Ovary (tissue), 10 donors: ENCODE measurements at regions of chr9 and their contacts with region 1.

Region 1: GRCh38 chr9:124420991-124421543 is 5.8 kb upstream of the PSMB7 start:
- DNase-seq: no peak
- H3K4me3 ChIP-seq: no peak overlapping the region
- H3K27ac ChIP-seq: no peak overlapping the region
- H3K4me1 ChIP-seq: no peaks in the 10 kb centered on the region
- H3K27me3 ChIP-seq: no peaks in the 10 kb centered on the region
- CTCF ChIP-seq: no peak
- EP300 ChIP-seq: no peak
- POLR2A ChIP-seq: no peak

Region 2: GRCh38 chr9:124399323-124399967 is 21.6 kb before region 1 on chr9:
- intact Hi-C with region 1: no loop called
- DNase-seq: no peak
- H3K4me3 ChIP-seq: no peak overlapping the region
- H3K27ac ChIP-seq: no peak overlapping the region
- H3K4me1 ChIP-seq: peaks cover 4% of the 10 kb centered on the region
- H3K27me3 ChIP-seq: no peaks in the 10 kb centered on the region
- CTCF ChIP-seq: no peak
- EP300 ChIP-seq: no peak
- POLR2A ChIP-seq: no peak

Region 3: DNA sequence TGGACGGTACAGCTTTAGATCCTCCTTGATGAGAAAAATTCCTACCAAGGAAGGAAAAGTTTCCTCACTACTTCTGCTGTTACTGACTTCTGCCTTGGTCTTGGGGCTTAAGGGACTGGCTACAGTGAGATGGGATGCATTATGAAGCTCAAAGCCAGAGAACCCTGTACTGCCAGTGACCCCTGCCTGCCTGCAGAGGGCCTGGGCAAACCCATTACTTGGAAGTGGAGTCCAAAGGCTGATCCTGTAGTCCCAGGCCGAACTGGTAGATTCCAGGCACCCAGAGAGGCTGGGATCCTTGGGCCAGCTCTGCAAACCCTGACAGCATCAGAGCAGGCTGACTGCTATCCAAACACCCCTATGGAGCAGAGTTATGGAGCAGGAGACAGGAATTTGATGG is 111.8 kb after region 1 on chr9:
- intact Hi-C with region 1: loop called (anchors 2 to 5 kb)
- DNase-seq: no peak
- H3K4me3 ChIP-seq: no peak overlapping the region
- H3K27ac ChIP-seq: no peak overlapping the region
- H3K4me1 ChIP-seq: no peaks in the 10 kb centered on the region
- H3K27me3 ChIP-seq: no peaks in the 10 kb centered on the region
- CTCF ChIP-seq: no peak
- EP300 ChIP-seq: no peak
- POLR2A ChIP-seq: no peak

Region 4: GRCh38 chr9:124537926-124538325 is 116.9 kb after region 1 on chr9:
- intact Hi-C with region 1: loop called (anchors 2 to 5 kb)
- DNase-seq: no peak
- H3K4me3 ChIP-seq: no peak overlapping the region
- H3K27ac ChIP-seq: no peak overlapping the region
- H3K4me1 ChIP-seq: no peaks in the 10 kb centered on the region
- H3K27me3 ChIP-seq: no peaks in the 10 kb centered on the region
- CTCF ChIP-seq: no peak
- EP300 ChIP-seq: no peak
- POLR2A ChIP-seq: no peak